GM12878 (cell line): ENCODE measurements at regions of chr21 and their contacts with region 1.

Region 1: DNA sequence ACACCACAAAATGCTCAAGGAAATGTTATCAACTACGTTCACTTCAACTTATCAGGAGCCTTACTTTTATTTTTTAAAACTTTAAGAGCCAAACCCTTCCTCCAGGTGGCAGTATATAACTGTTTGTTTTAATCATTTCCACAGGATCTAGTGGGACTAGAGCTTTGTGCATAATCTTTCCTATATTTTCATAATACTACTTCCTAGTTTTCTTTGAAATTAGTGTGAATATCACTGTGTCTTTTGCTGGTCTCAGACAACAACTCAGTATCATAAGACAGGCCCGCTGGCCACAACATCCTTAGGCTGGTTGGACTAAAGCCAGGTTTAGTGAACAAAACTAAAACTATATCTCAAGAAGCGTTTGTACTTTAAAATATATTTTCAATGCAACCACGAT is 145.5 kb downstream of the TIAM1 start:
- DNase-seq: no peak
- ATAC-seq: peak; percentile 28; the same call in 1 of the 3 replicates
- H3K4me3 ChIP-seq: no peak overlapping the region
- H3K27ac ChIP-seq: no peak overlapping the region
- H3K4me1 ChIP-seq: no peaks in the 10 kb centered on the region
- H3K27me3 ChIP-seq: no peaks in the 10 kb centered on the region
- CTCF ChIP-seq: peak; percentile 35 to 58 (median 42); a peak in 5 of 6 replicates
- EP300 ChIP-seq: no peak
- POLR2A ChIP-seq: no peak
- RAD21 ChIP-seq: peak; percentile 64

Region 2: GRCh38 chr21:30793581-30794314 is 404.8 kb before region 1 on chr21:
- CTCF ChIA-PET with region 1: no interaction called
- POLR2A ChIA-PET with region 1: no interaction called
- RAD21 ChIA-PET with region 1: no interaction called
- SMC1A ChIA-PET with region 1: no interaction called
- in situ Hi-C with region 1: no loop called
- intact Hi-C with region 1: no loop called
- DNase-seq: no peak
- ATAC-seq: no peak
- H3K4me3 ChIP-seq: no peak overlapping the region
- H3K27ac ChIP-seq: no peak overlapping the region
- H3K4me1 ChIP-seq: no peaks in the 10 kb centered on the region
- H3K27me3 ChIP-seq: no peaks in the 10 kb centered on the region
- CTCF ChIP-seq: no peak
- EP300 ChIP-seq: no peak
- POLR2A ChIP-seq: no peak
- RAD21 ChIP-seq: no peak

Region 3: GRCh38 chr21:31107871-31108270 is 90.7 kb before region 1 on chr21:
- CTCF ChIA-PET with region 1: interaction called, 10 read pairs
- POLR2A ChIA-PET with region 1: interaction called, 3 read pairs
- RAD21 ChIA-PET with region 1: interaction called, 10 read pairs
- SMC1A ChIA-PET with region 1: interaction called, 9 read pairs
- in situ Hi-C with region 1: no loop called
- intact Hi-C with region 1: loop called (anchors 5 kb)
- DNase-seq: no peak
- ATAC-seq: peak; percentile 70
- H3K4me3 ChIP-seq: no peak overlapping the region
- H3K27ac ChIP-seq: no peak overlapping the region
- H3K4me1 ChIP-seq: peaks cover 11% of the 10 kb centered on the region; the same call in 1 of the 2 replicates
- H3K27me3 ChIP-seq: no peaks in the 10 kb centered on the region
- CTCF ChIP-seq: no peak
- EP300 ChIP-seq: no peak
- POLR2A ChIP-seq: no peak
- RAD21 ChIP-seq: no peak

Region 4: GRCh38 chr21:31213795-31214194 is 15.2 kb after region 1 on chr21:
- CTCF ChIA-PET with region 1: interaction called, 4 read pairs
- POLR2A ChIA-PET with region 1: interaction called, 6 read pairs
- RAD21 ChIA-PET with region 1: no interaction called
- SMC1A ChIA-PET with region 1: interaction called, 24 read pairs
- in situ Hi-C with region 1: no loop called
- intact Hi-C with region 1: no loop called
- DNase-seq: no peak
- ATAC-seq: no peak
- H3K4me3 ChIP-seq: no peak overlapping the region
- H3K27ac ChIP-seq: no peak overlapping the region
- H3K4me1 ChIP-seq: no peaks in the 10 kb centered on the region
- H3K27me3 ChIP-seq: no peaks in the 10 kb centered on the region
- CTCF ChIP-seq: peak in 1 of 3 experiments; percentile 31; a peak in 1 of 6 replicates
- EP300 ChIP-seq: no peak
- POLR2A ChIP-seq: no peak
- RAD21 ChIP-seq: 0 out of 2 replicates have a peak, but pooled peaks have one; percentile 3

Region 5: DNA sequence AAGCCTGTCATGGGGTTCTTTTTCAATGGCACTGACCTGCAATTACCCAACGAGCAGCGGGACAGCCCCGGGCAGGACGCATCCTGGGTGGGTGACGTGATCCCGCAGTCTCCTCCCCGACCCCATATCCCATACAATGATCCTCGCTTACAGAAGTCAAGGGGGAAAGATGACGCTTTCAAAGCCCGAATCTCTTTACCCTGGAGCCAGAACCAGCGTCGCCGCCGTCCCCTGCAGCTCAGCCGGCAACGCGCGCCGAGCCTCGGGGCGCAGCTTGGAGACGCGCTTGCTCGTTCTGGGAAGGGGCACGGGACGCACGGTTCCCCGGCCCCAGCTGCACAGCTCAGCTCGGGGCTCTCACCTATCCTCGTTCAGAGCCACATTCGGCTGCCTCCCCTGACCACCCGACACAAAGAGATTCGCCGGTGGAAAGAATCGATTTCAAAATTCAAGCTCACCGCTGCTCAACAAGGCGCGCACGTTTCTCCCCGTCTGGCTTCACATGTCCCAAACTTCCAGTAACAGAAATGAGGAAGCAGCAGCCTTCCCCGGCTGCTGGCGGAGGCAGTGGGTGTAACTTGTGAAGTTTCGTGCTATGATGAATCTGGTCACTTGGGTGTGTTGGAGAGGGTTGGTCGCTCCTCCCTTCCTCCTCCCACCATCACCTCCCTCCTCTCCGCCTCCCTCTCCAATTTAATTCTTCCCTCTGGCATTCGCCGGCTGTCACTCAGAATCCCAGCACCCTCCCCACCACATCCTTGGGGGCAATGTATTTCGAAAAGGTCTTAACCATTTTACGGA is 145.3 kb after region 1 on chr21 and contains the start of gene TIAM1:
- CTCF ChIA-PET with region 1: interaction called, 4 read pairs
- POLR2A ChIA-PET with region 1: interaction called, 4 read pairs
- RAD21 ChIA-PET with region 1: interaction called, 4 read pairs
- SMC1A ChIA-PET with region 1: interaction called, 9 read pairs
- in situ Hi-C with region 1: no loop called
- intact Hi-C with region 1: loop called (anchors 1 kb)
- DNase-seq: no peak
- ATAC-seq: peak; percentile 76
- H3K4me3 ChIP-seq: no peak within 1 kb of the TSS
- H3K27ac ChIP-seq: no peak within 1 kb of the TSS
- H3K4me1 ChIP-seq: no peaks in the 10 kb centered on the region
- H3K27me3 ChIP-seq: no peaks in the 10 kb centered on the region; a peak in 1 of 4 replicates
- CTCF ChIP-seq: no peak
- EP300 ChIP-seq: no peak
- POLR2A ChIP-seq: no peak
- RAD21 ChIP-seq: no peak
- polyA plus RNA-seq, gene TIAM1: 0.31 to 0.42 TPM

Region 6: DNA sequence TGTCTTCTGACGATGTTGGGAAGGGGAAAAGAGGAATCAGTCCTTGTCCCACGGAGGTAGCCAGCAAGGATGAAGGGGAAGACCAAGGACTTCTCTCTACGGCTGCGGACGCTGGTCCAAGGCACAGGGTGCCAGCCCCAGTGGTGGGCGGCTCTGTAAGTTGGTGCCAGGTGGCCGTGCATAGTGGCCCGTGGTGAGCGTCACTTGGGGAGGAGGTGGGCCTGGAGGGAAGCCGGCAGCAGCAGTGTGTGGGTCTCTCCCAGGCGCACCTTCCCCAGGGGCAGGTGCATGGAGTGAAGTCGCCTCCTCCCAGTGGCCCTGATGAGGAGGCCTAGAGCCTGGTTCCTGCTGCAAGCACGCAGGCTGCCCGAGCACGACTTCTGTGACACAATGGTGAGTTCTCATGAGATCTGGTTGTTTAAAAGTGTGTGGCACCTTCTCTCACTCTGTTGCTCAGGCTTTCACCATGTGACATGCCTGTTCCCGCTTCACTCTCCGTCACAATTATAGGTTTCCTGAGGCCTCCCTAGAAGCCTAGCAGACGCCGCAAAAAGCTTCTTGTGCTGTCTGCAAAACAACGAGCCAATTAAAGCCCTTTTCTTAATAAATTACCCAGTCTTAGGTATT is 189.1 kb after region 1 on chr21:
- CTCF ChIA-PET with region 1: no interaction called
- POLR2A ChIA-PET with region 1: no interaction called
- RAD21 ChIA-PET with region 1: no interaction called
- SMC1A ChIA-PET with region 1: no interaction called
- in situ Hi-C with region 1: no loop called
- intact Hi-C with region 1: no loop called
- DNase-seq: no peak
- ATAC-seq: no peak
- H3K4me3 ChIP-seq: no peak overlapping the region
- H3K27ac ChIP-seq: no peak overlapping the region
- H3K4me1 ChIP-seq: no peaks in the 10 kb centered on the region
- H3K27me3 ChIP-seq: no peaks in the 10 kb centered on the region
- CTCF ChIP-seq: no peak
- EP300 ChIP-seq: no peak
- POLR2A ChIP-seq: no peak
- RAD21 ChIP-seq: no peak

Region 7: GRCh38 chr21:31558962-31559367 is 360.4 kb after region 1 on chr21:
- CTCF ChIA-PET with region 1: interaction called, 8 read pairs
- POLR2A ChIA-PET with region 1: interaction called, 3 read pairs
- RAD21 ChIA-PET with region 1: interaction called, 17 read pairs
- SMC1A ChIA-PET with region 1: interaction called, 7 read pairs
- in situ Hi-C with region 1: no loop called
- intact Hi-C with region 1: no loop called
- DNase-seq: peak; percentile 54
- ATAC-seq: peak; percentile 85
- H3K4me3 ChIP-seq: peak overlapping the region; percentile 53
- H3K27ac ChIP-seq: no peak overlapping the region
- H3K4me1 ChIP-seq: peaks cover 8% of the 10 kb centered on the region
- H3K27me3 ChIP-seq: peaks cover 0 to 5% of the 10 kb centered on the region in 2 experiments; a peak in 1 of 4 replicates
- CTCF ChIP-seq: peak; percentile 5 to 43 (median 22); a peak in 3 of 6 replicates
- EP300 ChIP-seq: no peak
- POLR2A ChIP-seq: no peak; the same call in 1 of the 2 replicates
- RAD21 ChIP-seq: no peak